ENCODE measurements at regions of chr1 and their contacts with region 1.

Region 1: GRCh38 chr1:56409094-56409691 is 170.2 kb downstream of the PLPP3 start:
- DNase-seq: no peak

Region 2: DNA sequence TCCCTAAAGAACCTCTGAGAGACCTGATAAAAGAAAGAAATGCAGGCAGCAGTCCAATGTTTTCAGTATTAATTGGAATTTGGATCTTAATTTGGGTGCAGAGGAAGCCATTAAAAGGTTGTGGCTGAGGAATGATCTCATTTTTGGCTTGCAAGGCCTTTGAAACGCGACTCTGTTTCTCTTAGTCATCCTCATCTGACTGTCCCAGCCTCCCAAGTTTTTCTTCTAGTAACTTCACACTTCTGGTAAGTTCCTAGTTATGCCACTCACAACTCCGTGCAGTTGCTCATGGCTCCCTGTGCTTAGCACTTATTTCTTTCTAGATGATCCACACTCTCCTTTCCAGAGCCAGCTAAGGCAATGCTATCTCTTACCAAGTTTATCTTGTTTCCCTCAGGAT is 1046.6 kb before region 1 on chr1:
- intact Hi-C with region 1: loop called (anchors 10 kb)
- DNase-seq: no peak

Region 3: DNA sequence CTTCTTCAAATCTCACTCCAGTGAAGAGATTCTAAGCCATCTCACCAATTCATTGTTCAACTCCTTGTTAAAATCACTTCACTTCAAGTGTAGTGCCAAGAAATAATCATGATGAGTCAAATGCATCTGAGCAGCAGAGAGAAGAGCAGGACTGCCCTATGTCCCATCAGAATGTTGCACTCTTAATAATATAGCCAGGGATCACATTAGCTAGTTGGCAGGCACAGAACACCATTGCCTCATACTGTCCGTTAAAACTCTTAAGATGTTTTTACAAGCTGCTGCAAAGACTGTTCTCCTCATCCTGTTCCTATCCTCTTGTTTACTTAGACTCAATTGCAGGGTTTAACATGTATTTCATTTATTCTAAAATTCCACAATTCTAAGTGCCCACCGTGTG is 262.7 kb before region 1 on chr1:
- intact Hi-C with region 1: loop called (anchors 5 kb)
- DNase-seq: no peak

Region 4: DNA sequence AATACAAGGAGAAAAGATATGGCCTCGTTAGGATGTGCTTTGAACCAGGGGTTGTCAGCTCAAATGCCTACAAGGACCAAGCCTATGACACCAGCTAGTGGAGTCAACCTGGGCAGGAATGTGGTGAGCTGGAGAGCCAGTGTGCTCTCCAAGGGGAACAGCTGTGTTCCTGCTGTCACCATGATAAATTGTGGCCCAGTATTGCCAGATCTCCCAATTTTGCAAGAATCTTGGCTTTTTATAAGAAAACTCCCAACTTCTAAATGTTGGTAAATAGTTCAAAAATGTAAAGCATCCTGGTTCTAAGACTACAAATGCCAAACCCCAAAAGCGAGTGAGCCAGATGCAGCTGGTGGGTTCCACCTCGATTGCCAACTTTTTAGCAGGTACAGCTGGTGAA is 221.0 kb before region 1 on chr1:
- intact Hi-C with region 1: no loop called
- DNase-seq: no peak

Region 5: DNA sequence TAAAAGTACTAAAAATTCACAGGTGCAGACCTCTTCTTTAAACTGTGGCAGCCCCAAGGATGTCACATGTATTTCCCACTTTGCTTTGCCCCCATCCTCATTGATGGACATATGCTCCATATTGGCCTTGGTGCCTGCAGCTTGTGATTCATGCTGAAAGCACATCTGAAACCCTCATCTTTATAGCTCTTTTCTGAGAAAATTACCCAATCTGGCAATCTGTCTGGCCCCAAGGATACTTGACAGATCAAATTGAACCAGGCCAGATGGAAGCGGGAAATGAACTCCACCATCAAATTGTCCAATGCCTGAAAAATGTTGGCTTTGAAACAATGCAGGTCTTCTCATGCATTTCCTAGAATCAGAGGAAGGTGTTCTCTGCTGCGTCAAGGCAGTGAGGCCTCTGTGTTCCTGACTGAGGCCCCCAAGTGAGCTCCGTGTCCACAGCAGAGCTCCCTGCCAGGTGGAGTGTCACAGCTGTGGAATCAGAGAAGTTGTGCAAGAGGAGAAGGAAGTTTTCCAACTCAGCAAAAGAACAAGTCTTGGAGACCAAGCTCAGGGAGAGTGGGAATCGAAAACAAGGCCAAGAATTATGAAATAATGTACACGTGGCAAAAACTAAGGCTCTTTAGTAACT is 153.6 kb before region 1 on chr1:
- intact Hi-C with region 1: loop called (anchors 5 kb)
- DNase-seq: no peak

Region 6: GRCh38 chr1:56456436-56457101 is 47.4 kb after region 1 on chr1:
- intact Hi-C with region 1: loop called (anchors 5 kb)
- DNase-seq: no peak